ENCODE measurements at regions of chr7 and their contacts with region 1.

Region 1: DNA sequence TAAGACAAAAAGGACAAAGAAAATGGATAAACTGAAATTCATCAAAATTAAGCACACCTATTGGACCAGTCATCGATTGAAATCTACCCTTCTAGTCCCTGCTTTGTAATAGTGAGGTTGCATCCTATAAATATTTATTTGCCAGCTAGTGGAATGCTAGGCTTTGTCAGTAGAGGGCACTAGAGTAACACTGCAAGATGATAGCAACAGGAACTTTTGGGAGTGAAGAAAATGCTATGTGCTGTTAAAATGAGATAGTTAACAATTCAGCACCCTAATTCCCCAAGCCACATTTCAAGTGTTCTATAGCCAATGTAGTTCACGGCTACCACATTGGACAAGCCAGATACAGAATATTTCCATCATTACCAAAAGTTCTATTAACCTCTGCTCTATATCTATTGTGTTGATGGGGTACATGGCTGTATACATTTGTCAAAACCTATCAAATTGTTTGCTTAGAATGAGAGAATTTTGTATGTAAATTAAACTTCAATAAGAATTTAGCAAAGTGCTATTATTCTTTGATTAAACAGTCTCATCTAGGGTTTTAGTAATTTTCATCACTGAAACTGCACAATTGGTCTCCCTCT is 69.8 kb downstream of the LSMEM1 start:
- DNase-seq: peak in 12 of 35 experiments; percentile 2 to 74 (median 10)
- ATAC-seq: peak in 1 of 4 experiments; percentile 46
- H3K4me3 ChIP-seq: no peak overlapping the region
- H3K4me3 Mint-ChIP-seq: no peak overlapping the region
- H3K27ac ChIP-seq: no peak overlapping the region
- H3K27ac Mint-ChIP-seq: no peak overlapping the region
- H3K4me1 ChIP-seq: no peaks in the 10 kb centered on the region
- H3K4me1 Mint-ChIP-seq: no peaks in the 10 kb centered on the region
- H3K27me3 ChIP-seq: peaks cover 0 to 14% of the 10 kb centered on the region in 2 experiments
- H3K27me3 Mint-ChIP-seq: peaks cover 11 to 17% of the 10 kb centered on the region in 2 donors

Region 2: DNA sequence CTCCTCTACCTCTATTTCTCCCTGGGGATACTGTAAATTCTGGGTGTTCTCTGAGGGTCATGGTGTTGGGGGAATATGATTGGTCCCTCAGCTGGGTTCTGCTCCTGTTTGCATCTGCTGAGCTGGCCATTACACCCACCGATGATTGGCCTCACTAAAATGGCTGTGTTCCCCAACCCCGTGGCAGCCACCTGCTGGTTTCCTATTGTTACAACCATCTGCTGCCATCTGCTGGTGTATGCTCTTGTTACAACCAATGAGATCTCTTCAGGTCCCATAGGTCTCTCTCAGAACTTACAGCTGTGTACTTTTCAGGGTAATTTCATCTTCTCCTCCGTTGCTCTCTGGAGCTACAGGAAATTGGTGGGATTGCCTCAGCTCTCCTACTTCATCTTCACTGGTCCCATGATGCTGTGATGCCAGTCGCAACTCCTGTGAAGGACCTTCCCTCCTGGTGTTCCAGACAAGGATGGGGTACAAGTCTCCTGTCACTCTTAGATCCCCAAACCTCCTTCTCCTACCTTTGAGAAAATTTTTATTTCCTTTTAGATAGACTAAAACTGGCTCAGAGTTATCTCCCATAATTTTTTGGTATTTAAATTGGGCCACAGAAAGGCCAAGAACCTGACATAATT is 871.2 kb after region 1 on chr7:
- CTCF ChIA-PET with region 1: interaction called, 5 to 23 read pairs
- POLR2A ChIA-PET with region 1: no interaction called
- DNase-seq: peak; percentile 29 to 82 (median 61)
- ATAC-seq: peak; percentile 82 to 97 (median 86)
- H3K4me3 ChIP-seq: no peak overlapping the region
- H3K4me3 Mint-ChIP-seq: no peak overlapping the region
- H3K27ac ChIP-seq: no peak overlapping the region
- H3K27ac Mint-ChIP-seq: no peak overlapping the region
- H3K4me1 ChIP-seq: peaks cover 0 to 3% of the 10 kb centered on the region in 2 experiments
- H3K4me1 Mint-ChIP-seq: peaks cover 3 to 6% (median 4%) of the 10 kb centered on the region in 3 donors
- H3K27me3 ChIP-seq: no peaks in the 10 kb centered on the region
- H3K27me3 Mint-ChIP-seq: peaks cover 0 to 2% of the 10 kb centered on the region in 2 donors

Measured in T-cell (primary cell).